ENCODE measurements at regions of chr1 and their contacts with region 1.

Region 1: DNA sequence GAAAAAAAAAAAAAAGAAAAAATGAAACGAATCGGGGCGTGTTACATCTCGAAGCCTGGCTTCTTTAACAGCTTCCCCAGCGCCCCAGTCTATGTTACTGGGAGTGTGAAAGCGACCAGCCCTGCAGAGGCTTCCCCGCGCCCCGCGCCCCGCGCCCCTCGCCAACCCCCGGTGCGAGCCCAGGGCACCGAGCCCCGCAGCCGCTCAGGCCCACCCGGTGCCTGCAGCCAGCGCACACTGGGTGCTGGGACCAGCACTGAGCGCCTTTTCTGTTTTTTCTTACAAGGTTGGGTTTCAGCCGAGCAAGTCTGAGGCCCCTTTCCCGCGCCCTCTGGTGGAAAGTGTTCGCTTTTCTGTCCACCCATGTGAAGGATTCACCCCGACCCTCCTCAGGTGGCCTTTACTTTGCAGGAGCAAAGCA is 42.1 kb upstream of the ZNF496 start:
- DNase-seq: peak; percentile 6
- ATAC-seq: peak; percentile 80
- H3K4me3 ChIP-seq: no peak overlapping the region
- H3K27ac ChIP-seq: no peak overlapping the region
- H3K4me1 ChIP-seq: no peaks in the 10 kb centered on the region
- H3K27me3 ChIP-seq: peaks cover 0 to 26% of the 10 kb centered on the region in 2 experiments; a peak in 3 of 5 replicates
- CTCF ChIP-seq: peak; percentile 37
- EP300 ChIP-seq: no peak
- POLR2A ChIP-seq: no peak
- RAD21 ChIP-seq: no peak

Region 2: GRCh38 chr1:247043406-247043805 is 330.3 kb before region 1 on chr1:
- CTCF ChIA-PET with region 1: no interaction called
- POLR2A ChIA-PET with region 1: no interaction called
- in situ Hi-C with region 1: no loop called
- intact Hi-C with region 1: loop called (anchors 1 kb)
- DNase-seq: no peak
- ATAC-seq: no peak
- H3K4me3 ChIP-seq: no peak overlapping the region
- H3K27ac ChIP-seq: no peak overlapping the region
- H3K4me1 ChIP-seq: no peaks in the 10 kb centered on the region
- H3K27me3 ChIP-seq: no peaks in the 10 kb centered on the region
- CTCF ChIP-seq: peak; percentile 58
- EP300 ChIP-seq: no peak
- POLR2A ChIP-seq: no peak
- RAD21 ChIP-seq: no peak

Region 3: DNA sequence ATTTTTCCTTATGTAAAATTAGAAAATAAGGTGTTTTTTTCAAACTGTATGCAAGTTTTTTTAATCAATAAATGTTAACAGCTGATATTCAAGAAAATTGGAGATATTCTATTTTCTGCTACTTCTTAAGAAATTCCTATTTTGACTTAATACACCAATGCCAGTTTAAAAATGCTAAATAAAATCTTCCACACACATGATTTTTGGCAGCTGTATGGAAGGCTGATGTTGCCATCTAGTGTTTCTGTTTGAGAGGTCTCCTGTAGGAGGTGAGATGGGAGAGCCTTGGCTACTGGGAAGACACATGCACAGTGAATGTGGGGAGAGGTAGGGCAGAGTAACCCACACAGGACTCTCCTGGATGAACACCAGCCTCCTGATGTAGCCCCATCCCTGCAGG is 113.3 kb after region 1 on chr1:
- CTCF ChIA-PET with region 1: no interaction called
- POLR2A ChIA-PET with region 1: no interaction called
- in situ Hi-C with region 1: no loop called
- intact Hi-C with region 1: loop called (anchors 1 kb)
- DNase-seq: peak; percentile 20
- ATAC-seq: peak; percentile 85
- H3K4me3 ChIP-seq: no peak overlapping the region
- H3K27ac ChIP-seq: no peak overlapping the region
- H3K4me1 ChIP-seq: no peaks in the 10 kb centered on the region
- H3K27me3 ChIP-seq: no peaks in the 10 kb centered on the region; a peak in 2 of 5 replicates
- CTCF ChIP-seq: peak; percentile 62
- EP300 ChIP-seq: no peak
- POLR2A ChIP-seq: no peak
- RAD21 ChIP-seq: no peak

Region 4: DNA sequence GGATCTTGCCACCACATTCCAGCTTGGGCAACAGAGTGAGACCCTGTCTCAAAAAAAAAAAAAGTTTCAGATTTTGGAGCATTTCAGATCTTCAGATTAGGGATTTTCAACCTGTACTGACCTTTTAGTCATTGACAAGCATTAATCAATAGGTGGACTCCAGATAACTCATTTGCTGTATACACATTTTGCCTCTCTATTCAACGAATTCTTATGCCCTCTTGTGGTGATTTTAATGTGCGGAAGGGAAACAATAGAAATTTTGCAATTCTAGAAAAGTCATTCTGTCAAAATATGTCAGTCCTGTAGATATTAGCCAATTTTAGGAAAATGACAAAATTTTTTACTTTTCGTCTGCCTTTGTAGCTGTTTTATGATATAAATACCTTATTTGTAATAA is 202.8 kb after region 1 on chr1:
- CTCF ChIA-PET with region 1: no interaction called
- POLR2A ChIA-PET with region 1: no interaction called
- in situ Hi-C with region 1: no loop called
- intact Hi-C with region 1: loop called (anchors 5 kb)
- DNase-seq: peak; percentile 12
- ATAC-seq: peak; percentile 30; the same call in 1 of the 3 replicates
- H3K4me3 ChIP-seq: no peak overlapping the region
- H3K27ac ChIP-seq: no peak overlapping the region
- H3K4me1 ChIP-seq: no peaks in the 10 kb centered on the region
- H3K27me3 ChIP-seq: no peaks in the 10 kb centered on the region
- CTCF ChIP-seq: peak; percentile 55
- EP300 ChIP-seq: no peak
- POLR2A ChIP-seq: no peak
- RAD21 ChIP-seq: no peak

Measured in HepG2 (cell line).